ENCODE measurements at regions of chr15 and their contacts with region 1.

Region 1: GRCh38 chr15:90191794-90192509 is 9.2 kb upstream of the SEMA4B start:
- DNase-seq: peak; percentile 89
- H3K4me3 ChIP-seq: peak overlapping the region; percentile 53
- H3K27ac ChIP-seq: peak overlapping the region; percentile 79
- H3K4me1 ChIP-seq: peaks cover 62% of the 10 kb centered on the region
- CTCF ChIP-seq: no peak; the same call in 1 of the 2 replicates

Region 2: DNA sequence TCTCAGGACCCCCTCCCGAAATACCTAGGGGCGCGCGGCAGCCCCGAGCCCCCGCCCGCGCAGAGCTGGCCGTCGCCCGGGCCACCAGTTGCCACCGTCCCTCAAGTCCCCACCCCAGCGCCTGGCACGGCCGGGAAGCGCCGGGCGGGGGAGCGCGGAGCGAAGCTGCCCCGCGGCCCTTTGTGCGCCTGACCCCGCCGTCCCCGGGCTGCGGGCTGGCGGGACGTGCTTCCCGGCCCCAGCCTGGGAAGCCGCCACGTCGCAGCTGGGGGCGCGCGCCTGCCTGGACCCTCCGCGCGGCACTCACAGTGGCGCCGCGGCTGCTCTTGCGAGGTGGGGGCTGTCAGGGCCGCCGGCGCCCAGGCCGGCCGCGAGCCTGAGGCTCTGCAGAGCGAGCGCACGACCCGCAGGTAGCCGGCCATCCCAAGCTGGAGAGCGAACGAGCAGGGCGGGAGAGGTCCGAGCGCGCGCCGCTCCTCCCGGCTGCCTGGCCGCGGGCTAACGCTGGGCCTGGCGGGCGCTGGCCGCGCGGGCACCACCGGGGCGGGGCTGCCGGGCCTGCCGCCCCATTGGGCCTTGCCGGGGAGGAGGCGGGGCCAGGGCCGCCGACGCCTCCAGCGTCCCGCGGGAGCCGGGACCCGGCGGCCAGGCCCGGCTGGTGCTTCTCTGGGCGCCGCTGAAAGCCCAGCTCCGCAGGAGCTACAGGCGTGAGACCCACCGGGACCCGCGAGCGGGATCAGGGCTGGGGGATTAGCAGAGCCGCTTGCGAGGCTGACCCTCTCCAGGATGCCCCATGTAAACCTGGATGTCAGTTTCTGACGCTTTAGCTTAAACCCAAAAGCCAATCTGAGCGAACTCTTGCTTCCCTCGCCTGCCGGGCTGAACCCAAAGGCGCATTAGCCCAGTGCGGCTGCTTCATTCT is 89.7 kb before region 1 on chr15 and contains the start of gene IDH2:
- CTCF ChIA-PET with region 1: interaction called, 3 read pairs
- POLR2A ChIA-PET with region 1: interaction called, 3 read pairs
- intact Hi-C with region 1: loop called (anchors 5 kb)
- DNase-seq: peak; percentile 84
- H3K4me3 ChIP-seq: peak within 1 kb of the TSS; percentile 89
- H3K27ac ChIP-seq: peak within 1 kb of the TSS; percentile 99
- H3K4me1 ChIP-seq: peaks cover 56% of the 10 kb centered on the region
- CTCF ChIP-seq: no peak
- total RNA-seq, gene IDH2: 204 and 220 TPM in 2 replicates

Region 3: DNA sequence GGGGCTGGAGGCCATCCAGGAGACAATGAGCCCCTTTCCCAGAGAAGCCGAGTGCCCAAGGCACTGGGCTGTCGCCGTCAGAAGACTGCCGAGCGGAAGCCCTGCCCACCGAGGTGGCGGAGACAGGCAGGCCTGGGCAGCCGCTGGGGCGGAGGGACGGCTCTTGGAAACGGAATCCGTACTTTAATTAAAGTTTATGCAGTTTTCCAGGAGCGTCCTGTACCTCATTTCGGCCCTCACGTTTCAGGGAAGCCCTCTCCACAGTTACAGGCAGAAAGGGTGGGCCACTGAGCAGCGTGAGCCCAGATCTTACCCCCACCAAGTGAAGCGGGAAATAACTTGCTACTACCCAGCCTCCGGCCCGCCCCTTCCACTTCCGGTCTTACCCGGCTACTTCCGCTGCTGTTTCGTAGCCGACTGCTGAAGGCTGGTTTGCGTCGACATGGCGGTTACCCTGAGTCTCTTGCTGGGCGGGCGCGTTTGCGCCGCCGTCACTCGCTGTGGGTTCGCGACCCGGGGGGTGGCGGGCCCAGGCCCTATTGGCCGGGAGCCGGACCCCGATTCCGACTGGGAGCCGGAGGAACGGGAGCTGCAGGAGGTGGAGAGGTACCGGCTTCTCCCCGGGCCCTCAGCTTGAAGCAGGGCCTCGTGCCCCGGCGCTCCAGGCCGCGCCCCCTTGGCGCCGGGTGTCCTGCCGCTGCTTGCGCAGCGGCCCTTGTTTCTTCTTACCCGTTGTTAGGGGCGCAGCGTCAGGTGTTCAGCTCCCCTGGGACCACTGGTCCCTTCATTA is 73.5 kb after region 1 on chr15 and contains the start of gene NGRN:
- CTCF ChIA-PET with region 1: no interaction called
- POLR2A ChIA-PET with region 1: interaction called, 4 read pairs
- intact Hi-C with region 1: loop called (anchors 2 kb)
- DNase-seq: peak; percentile 93
- H3K4me3 ChIP-seq: peak within 1 kb of the TSS; percentile 74
- H3K27ac ChIP-seq: peak within 1 kb of the TSS; percentile 81
- H3K4me1 ChIP-seq: peaks cover 43% of the 10 kb centered on the region
- CTCF ChIP-seq: no peak
- total RNA-seq, gene NGRN: 65.0 and 72.8 TPM in 2 replicates

Region 4: GRCh38 chr15:90718232-90718631 is 526.3 kb after region 1 on chr15:
- CTCF ChIA-PET with region 1: no interaction called
- POLR2A ChIA-PET with region 1: no interaction called
- intact Hi-C with region 1: no loop called
- DNase-seq: peak; percentile 8
- H3K4me3 ChIP-seq: peak overlapping the region; percentile 96
- H3K27ac ChIP-seq: peak overlapping the region; percentile 88
- H3K4me1 ChIP-seq: peaks cover 23% of the 10 kb centered on the region
- CTCF ChIP-seq: no peak